ENCODE measurements at regions of chr5 and their contacts with region 1.

Region 1: DNA sequence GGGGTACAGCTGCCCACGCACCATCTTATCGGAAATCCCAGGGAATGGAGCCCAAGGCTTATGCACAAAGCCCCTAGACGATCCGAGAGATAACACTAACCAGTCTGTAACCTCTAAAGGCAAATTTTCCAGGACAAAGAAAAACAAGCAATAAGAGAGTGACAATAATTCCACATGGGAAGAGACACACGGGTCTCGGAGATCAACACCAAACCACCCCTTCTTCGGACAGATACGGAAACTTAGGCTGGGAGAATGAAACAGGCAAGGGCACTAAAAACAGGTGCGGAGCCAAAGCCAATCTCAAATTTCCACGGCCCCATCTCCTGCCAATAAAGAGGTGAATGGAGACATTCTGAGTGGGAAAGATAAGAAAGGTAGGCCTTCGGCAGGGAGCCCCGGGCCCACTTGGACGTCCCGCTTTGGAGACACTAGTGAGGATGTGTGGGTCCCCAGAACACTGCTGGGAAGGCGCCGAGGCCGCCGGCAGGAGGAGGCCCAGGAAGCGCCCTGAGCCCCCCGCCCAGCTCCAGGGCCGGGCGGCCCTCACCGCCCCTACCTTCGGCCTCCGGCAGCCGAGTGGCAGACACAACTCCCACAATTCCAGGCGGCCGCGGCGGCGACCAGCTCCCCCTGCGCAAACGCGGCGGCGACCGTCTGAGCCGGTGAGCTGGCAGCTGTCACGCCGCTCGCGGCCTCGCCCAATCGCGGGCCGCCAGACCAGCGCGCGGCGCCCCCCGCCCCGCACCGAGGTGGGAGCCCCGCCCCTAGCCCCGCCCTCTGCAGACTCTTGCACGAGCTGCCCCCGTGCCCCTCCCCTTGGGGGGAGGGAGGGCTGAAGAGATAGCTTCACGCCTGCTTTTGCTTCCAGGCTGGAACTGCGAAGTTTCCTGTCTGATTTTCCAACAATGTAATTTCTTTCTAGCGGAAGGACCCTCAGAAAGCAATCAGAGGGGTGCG is at the start of gene SIL1:
- DNase-seq: peak; percentile 97
- H3K4me3 Mint-ChIP-seq: peak within 1 kb of the TSS; percentile 89
- H3K27ac Mint-ChIP-seq: peak within 1 kb of the TSS; percentile 82
- H3K4me1 Mint-ChIP-seq: peaks cover 27% of the 10 kb centered on the region
- H3K27me3 Mint-ChIP-seq: no peaks in the 10 kb centered on the region
- total RNA-seq, gene SIL1: 21.4 to 29.6 TPM

Region 2: DNA sequence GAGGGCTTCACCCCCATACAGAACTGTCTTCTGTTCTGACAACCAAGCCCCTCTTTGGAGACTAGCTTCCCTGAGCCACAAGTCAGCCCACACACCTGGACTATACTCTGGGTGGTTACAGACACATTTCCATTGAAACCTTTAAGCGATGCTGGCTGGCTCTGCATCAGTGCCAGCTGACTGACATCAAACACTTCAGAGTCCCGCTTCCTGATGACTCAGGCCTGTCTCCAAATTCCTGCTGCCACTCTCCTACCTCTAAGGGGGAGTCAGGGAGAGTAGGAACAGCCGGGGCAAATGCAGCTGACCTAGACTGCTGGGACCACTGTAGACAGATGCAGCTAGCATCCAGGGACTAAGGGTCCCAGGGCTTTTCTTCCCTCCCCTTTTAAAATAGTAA is 59.2 kb before region 1 on chr5:
- CTCF ChIA-PET with region 1: no interaction called
- intact Hi-C with region 1: loop called (anchors 2 kb)
- DNase-seq: no peak
- H3K4me3 Mint-ChIP-seq: no peak overlapping the region
- H3K27ac Mint-ChIP-seq: no peak overlapping the region
- H3K4me1 Mint-ChIP-seq: peaks cover 12% of the 10 kb centered on the region
- H3K27me3 Mint-ChIP-seq: no peaks in the 10 kb centered on the region

Region 3: DNA sequence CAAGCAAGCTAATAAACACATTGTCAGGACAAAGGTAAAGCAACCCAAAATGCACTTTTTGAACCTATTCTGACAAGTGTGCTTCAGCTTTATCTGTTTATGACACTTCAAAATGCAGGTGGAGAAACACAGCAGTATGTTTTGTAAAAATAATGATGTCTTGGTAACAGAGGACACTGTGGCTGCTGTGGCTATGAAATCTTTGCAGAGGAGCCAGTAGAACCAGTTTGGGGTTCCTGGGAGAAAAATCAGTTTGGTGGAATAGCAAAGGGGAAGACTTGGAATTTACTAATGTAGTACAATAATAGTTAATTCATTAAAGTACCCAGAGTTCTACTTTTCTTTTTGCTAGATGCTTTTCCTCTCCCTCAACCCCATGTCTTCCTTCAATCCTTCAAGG is 40.4 kb before region 1 on chr5:
- CTCF ChIA-PET with region 1: no interaction called
- intact Hi-C with region 1: no loop called
- DNase-seq: no peak
- H3K4me3 Mint-ChIP-seq: no peak overlapping the region
- H3K27ac Mint-ChIP-seq: no peak overlapping the region
- H3K4me1 Mint-ChIP-seq: no peaks in the 10 kb centered on the region
- H3K27me3 Mint-ChIP-seq: no peaks in the 10 kb centered on the region

Region 4: DNA sequence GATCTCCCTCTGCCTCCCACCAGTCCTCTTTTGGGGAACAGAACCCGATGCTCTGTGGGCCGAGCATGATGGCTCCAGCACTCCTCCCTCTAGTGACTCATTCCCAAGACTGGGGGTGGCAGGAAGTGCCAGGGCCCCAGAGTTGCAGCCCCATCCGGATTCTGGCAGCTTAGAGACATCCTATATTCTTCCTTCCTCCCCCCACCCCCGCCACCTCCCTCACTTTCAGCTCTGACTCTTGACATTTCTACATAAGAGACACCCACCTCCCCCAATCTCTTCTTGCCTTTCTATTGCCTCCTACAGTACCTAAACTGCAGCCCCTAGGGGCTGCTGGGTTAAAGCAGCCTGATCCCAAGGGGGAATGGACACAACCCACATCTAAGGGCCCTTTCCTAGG is 48.4 kb after region 1 on chr5:
- CTCF ChIA-PET with region 1: interaction called, 3 read pairs
- intact Hi-C with region 1: loop called (anchors 1 kb)
- DNase-seq: peak; percentile 79
- H3K4me3 Mint-ChIP-seq: no peak overlapping the region
- H3K27ac Mint-ChIP-seq: peak overlapping the region; percentile 70
- H3K4me1 Mint-ChIP-seq: peaks cover 22% of the 10 kb centered on the region
- H3K27me3 Mint-ChIP-seq: no peaks in the 10 kb centered on the region

Region 5: GRCh38 chr5:139273572-139274289 is 75.7 kb after region 1 on chr5:
- CTCF ChIA-PET with region 1: no interaction called
- intact Hi-C with region 1: loop called (anchors 1 kb)
- DNase-seq: peak; percentile 91
- H3K4me3 Mint-ChIP-seq: peak overlapping the region; percentile 93
- H3K27ac Mint-ChIP-seq: peak overlapping the region; percentile 80
- H3K4me1 Mint-ChIP-seq: peaks cover 50% of the 10 kb centered on the region
- H3K27me3 Mint-ChIP-seq: no peaks in the 10 kb centered on the region

Region 6: GRCh38 chr5:139341650-139342422 is 143.8 kb after region 1 on chr5 and contains the start of gene PAIP2:
- CTCF ChIA-PET with region 1: no interaction called
- intact Hi-C with region 1: loop called (anchors 2 kb)
- DNase-seq: peak; percentile 99
- H3K4me3 Mint-ChIP-seq: peak within 1 kb of the TSS; percentile 100
- H3K27ac Mint-ChIP-seq: peak within 1 kb of the TSS; percentile 99
- H3K4me1 Mint-ChIP-seq: peaks cover 48% of the 10 kb centered on the region
- H3K27me3 Mint-ChIP-seq: no peaks in the 10 kb centered on the region
- total RNA-seq, gene PAIP2: 68.8 to 74.3 TPM

Region 7: GRCh38 chr5:139392678-139393496 is 194.9 kb after region 1 on chr5:
- CTCF ChIA-PET with region 1: no interaction called
- intact Hi-C with region 1: loop called (anchors 2 kb)
- DNase-seq: peak; percentile 86
- H3K4me3 Mint-ChIP-seq: peak overlapping the region; percentile 89
- H3K27ac Mint-ChIP-seq: peak overlapping the region; percentile 78
- H3K4me1 Mint-ChIP-seq: peaks cover 39% of the 10 kb centered on the region
- H3K27me3 Mint-ChIP-seq: no peaks in the 10 kb centered on the region

Measured in activated naive CD4-positive, alpha-beta T cell treated with anti-CD3 and anti-CD28 coated beads for 36 hours (primary cell).